ENCODE measurements at regions of chr12 and their contacts with region 1.

Region 1: GRCh38 chr12:122642009-122642408 is 61.1 kb downstream of the HCAR2 start:
- DNase-seq: peak; percentile 28
- ATAC-seq: no peak
- H3K4me3 ChIP-seq: no peak overlapping the region
- H3K27ac ChIP-seq: no peak overlapping the region
- H3K4me1 ChIP-seq: peaks cover 5% of the 10 kb centered on the region
- H3K27me3 ChIP-seq: no peaks in the 10 kb centered on the region
- CTCF ChIP-seq: no peak

Region 2: GRCh38 chr12:122350141-122350848 is 291.7 kb before region 1 on chr12:
- CTCF ChIA-PET with region 1: no interaction called
- POLR2A ChIA-PET with region 1: no interaction called
- intact Hi-C with region 1: no loop called
- DNase-seq: no peak
- ATAC-seq: peak; percentile 46
- H3K4me3 ChIP-seq: no peak overlapping the region
- H3K27ac ChIP-seq: no peak overlapping the region
- H3K4me1 ChIP-seq: no peaks in the 10 kb centered on the region
- H3K27me3 ChIP-seq: no peaks in the 10 kb centered on the region
- CTCF ChIP-seq: no peak; the same call in 1 of the 2 replicates

Region 3: GRCh38 chr12:122593910-122594309 is 48.1 kb before region 1 on chr12:
- CTCF ChIA-PET with region 1: no interaction called
- POLR2A ChIA-PET with region 1: no interaction called
- intact Hi-C with region 1: no loop called
- DNase-seq: no peak
- ATAC-seq: no peak
- H3K4me3 ChIP-seq: no peak overlapping the region
- H3K27ac ChIP-seq: no peak overlapping the region
- H3K4me1 ChIP-seq: no peaks in the 10 kb centered on the region
- H3K27me3 ChIP-seq: no peaks in the 10 kb centered on the region
- CTCF ChIP-seq: no peak

Region 4: DNA sequence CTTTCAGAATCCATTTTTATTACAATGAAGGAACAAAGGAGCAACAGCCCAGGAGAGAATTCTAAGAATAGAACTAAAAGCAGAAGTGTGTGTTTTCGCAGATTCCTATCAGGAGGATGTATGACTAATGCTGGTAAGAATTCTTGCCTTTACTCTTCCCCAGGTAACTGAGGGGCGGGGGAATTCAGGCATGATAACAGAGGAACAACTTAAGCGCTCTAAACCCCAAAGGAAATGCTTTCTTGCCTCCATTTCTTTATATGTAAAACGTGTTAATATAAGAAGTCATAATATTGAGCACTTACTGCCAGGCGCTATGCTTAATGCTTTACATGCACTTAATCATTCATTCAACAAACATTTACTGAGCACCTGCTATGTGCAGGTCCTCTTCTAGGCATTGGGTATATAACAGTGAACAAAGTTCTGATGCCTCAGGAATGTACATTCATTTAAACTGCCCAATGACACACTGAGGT is 84.1 kb after region 1 on chr12:
- CTCF ChIA-PET with region 1: interaction called, 10 read pairs
- POLR2A ChIA-PET with region 1: no interaction called
- intact Hi-C with region 1: loop called (anchors 5 kb)
- DNase-seq: peak; percentile 92
- ATAC-seq: peak; percentile 69
- H3K4me3 ChIP-seq: peak overlapping the region; percentile 38
- H3K27ac ChIP-seq: peak overlapping the region; percentile 63
- H3K4me1 ChIP-seq: peaks cover 49% of the 10 kb centered on the region
- H3K27me3 ChIP-seq: no peaks in the 10 kb centered on the region
- CTCF ChIP-seq: no peak

Region 5: DNA sequence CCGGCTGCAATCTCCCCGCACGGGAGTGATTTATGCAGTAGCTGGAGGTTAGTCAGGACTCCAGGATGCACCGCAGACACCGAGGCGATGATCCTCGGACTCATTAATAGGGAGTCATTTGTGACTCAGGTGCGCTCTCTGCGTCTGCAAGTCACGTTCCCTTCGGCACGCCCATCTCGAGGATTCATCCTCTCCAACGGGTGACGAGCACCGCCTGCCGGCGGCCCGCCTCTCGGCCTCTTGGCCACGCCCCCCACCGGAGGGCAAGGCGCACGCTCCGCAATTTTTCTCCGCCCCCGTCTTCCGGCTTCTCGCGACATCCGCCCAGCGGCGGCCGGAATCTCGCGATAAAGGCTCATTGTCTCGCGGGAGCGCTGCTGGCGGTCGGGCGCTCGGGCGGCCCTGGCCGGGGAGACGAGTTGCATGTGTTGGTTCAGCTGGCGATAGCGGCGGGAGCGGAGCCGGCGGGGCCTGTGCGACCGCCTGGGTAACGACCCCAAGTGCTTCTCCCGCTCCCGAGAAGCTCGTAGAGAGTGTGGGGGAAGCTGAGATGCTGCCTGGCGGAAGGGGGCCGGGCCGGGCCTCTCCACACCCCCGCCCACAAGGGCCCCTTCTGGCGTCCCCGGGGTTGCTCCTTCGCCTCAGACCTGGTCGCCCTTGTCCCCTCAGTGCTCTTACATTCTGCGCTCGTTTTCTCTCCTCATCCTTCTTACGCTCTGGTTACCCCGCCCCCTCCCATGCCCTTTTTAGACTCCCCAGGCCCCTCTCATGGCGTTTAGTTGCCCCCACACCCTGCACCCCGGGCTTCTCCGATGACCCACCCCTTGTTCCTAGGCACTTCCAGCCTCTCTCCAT is 110.7 kb after region 1 on chr12 and contains the start of gene DENR:
- CTCF ChIA-PET with region 1: interaction called, 14 read pairs
- POLR2A ChIA-PET with region 1: no interaction called
- intact Hi-C with region 1: loop called (anchors 1 kb)
- DNase-seq: peak; percentile 100
- ATAC-seq: peak; percentile 82
- H3K4me3 ChIP-seq: peak within 1 kb of the TSS; percentile 81
- H3K27ac ChIP-seq: peak within 1 kb of the TSS; percentile 54
- H3K4me1 ChIP-seq: peaks cover 30% of the 10 kb centered on the region
- H3K27me3 ChIP-seq: no peaks in the 10 kb centered on the region
- CTCF ChIP-seq: peak; percentile 95
- total RNA-seq, gene DENR: 83.3 and 91.9 TPM in 2 replicates

Measured in PC-3 (cell line).